Breast epithelium (tissue), 4 donors: ENCODE measurements at regions of chr1 and their contacts with region 1.

Region 1: GRCh38 chr1:56169856-56170255 is 409.5 kb downstream of the PLPP3 start:
- DNase-seq: no peak
- H3K4me3 ChIP-seq: no peak overlapping the region
- H3K27ac ChIP-seq: no peak overlapping the region
- H3K4me1 ChIP-seq: no peaks in the 10 kb centered on the region
- H3K27me3 ChIP-seq: no peaks in the 10 kb centered on the region
- CTCF ChIP-seq: no peak
- POLR2A ChIP-seq: no peak

Region 2: DNA sequence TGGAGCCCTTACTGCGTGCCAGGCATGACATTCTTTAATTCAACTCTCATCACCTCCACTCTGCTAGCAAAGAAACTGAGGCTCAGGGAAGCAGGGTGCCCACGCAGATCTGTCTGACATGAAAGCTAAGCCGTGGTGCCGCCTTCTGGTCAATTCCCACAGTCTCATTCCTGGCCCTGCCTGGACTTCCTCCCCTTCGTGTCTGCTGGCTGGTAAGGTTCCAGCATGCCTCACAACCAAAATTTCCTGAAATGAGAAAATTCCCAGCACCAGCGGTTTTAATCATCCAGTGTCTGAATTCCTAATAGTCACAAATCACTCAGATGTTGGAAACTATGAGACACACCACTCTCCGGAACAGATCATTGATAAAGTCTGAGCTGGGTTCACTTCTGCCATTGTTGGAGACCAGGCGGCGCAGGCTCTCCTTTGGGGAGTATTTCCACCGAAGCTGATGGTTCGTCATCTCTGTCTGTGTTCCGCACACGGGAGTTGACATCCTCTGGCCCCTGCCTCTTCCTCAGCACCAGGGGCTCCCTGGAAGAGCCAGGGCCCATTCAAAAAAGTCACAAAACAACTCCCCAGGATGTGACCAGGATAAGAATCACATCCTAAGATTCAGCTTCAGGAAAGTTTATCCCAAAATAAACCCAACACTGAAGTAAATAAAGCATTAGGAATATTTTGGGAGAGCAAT is 241.8 kb after region 1 on chr1:
- intact Hi-C with region 1: no loop called
- DNase-seq: no peak
- H3K4me3 ChIP-seq: no peak overlapping the region
- H3K27ac ChIP-seq: peak overlapping the region in 1 of 2 donors; percentile 33
- H3K4me1 ChIP-seq: no peaks in the 10 kb centered on the region
- H3K27me3 ChIP-seq: no peaks in the 10 kb centered on the region
- CTCF ChIP-seq: no peak
- POLR2A ChIP-seq: no peak

Region 3: GRCh38 chr1:57934745-57935144 is 1764.9 kb after region 1 on chr1:
- intact Hi-C with region 1: loop called (anchors 10 kb)
- DNase-seq: no peak
- H3K4me3 ChIP-seq: no peak overlapping the region
- H3K27ac ChIP-seq: no peak overlapping the region
- H3K4me1 ChIP-seq: no peaks in the 10 kb centered on the region
- H3K27me3 ChIP-seq: no peaks in the 10 kb centered on the region
- CTCF ChIP-seq: no peak
- POLR2A ChIP-seq: no peak